ENCODE measurements at regions of chr17 and their contacts with region 1.

Region 1: GRCh38 chr17:72120642-72121163 is at the start of gene SOX9:
- DNase-seq: peak; percentile 81 to 92
- ATAC-seq: peak; percentile 92 to 94 (median 93)
- H3K4me3 ChIP-seq: peak within 1 kb of the TSS; percentile 81
- H3K27ac ChIP-seq: peak within 1 kb of the TSS; percentile 88
- H3K4me1 ChIP-seq: peaks cover 5% of the 10 kb centered on the region
- H3K27me3 ChIP-seq: peaks cover 0 to 32% (median 12%) of the 10 kb centered on the region in 3 donors
- CTCF ChIP-seq: no peak
- total RNA-seq, gene SOX9: 1.6 to 2.7 (median 2.1) TPM

Region 2: DNA sequence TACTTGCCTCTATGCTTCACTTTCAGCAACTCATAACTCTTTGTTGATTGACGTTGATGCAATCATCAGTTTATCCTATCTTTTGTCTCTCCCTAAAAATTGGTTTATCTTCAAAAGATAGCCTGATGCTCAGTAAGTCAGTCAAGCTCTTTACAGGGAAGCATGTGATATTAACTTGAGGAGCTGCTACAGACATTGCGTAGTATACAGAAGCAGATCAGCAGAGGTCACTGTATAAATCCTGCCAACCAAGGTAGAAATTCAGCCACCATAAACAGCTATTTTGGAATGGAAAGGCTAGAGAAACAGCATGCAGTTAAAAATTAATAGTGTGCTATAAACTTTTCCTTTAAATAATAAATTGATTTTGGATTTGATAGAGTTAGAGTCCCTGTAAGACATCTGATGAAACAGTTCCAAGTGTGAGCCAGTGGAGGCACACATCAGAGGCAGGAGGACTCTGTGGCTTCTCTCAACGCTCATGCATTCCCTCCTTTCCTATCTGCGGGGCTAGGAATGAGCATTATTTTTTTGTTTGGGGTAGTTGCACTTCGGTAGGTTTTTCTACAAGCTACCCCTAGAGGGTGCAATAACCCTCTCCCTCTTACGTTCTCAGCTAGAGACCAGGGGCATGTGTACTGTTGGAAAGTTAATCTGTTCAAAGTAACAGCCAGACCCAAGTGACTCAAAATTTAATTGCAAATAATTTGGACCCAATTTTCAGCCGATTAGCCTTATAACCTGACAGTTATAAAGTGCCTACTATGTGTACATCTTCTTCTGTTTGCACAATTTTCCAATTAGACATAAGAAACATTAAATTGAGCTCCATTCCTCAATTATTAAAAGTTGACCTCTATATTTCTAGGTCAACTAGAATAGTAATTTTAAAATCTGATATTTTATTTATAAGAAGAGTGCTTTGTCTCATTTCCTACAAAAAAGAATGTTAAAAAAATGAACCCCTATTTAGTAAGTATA is 647.6 kb before region 1 on chr17:
- intact Hi-C with region 1: loop called (anchors 5 to 10 kb)
- DNase-seq: no peak
- ATAC-seq: peak; percentile 58 to 67 (median 64)
- H3K4me3 ChIP-seq: no peak overlapping the region
- H3K27ac ChIP-seq: no peak overlapping the region
- H3K4me1 ChIP-seq: no peaks in the 10 kb centered on the region
- H3K27me3 ChIP-seq: no peaks in the 10 kb centered on the region
- CTCF ChIP-seq: peak; percentile 57

Region 3: GRCh38 chr17:71777048-71777640 is 343.6 kb before region 1 on chr17:
- intact Hi-C with region 1: no loop called
- DNase-seq: no peak
- ATAC-seq: no peak
- H3K4me3 ChIP-seq: no peak overlapping the region
- H3K27ac ChIP-seq: no peak overlapping the region
- H3K4me1 ChIP-seq: no peaks in the 10 kb centered on the region
- H3K27me3 ChIP-seq: peaks cover 0 to 2% (median 0%) of the 10 kb centered on the region in 3 donors
- CTCF ChIP-seq: no peak

Region 4: GRCh38 chr17:71922439-71922838 is 198.3 kb before region 1 on chr17:
- intact Hi-C with region 1: loop called in 1 of 2 experiments (anchors 10 kb)
- DNase-seq: no peak
- ATAC-seq: peak in 2 of 4 donors; percentile 62 to 73
- H3K4me3 ChIP-seq: no peak overlapping the region
- H3K27ac ChIP-seq: peak overlapping the region; percentile 38
- H3K4me1 ChIP-seq: peaks cover 7% of the 10 kb centered on the region
- H3K27me3 ChIP-seq: no peaks in the 10 kb centered on the region
- CTCF ChIP-seq: no peak

Region 5: DNA sequence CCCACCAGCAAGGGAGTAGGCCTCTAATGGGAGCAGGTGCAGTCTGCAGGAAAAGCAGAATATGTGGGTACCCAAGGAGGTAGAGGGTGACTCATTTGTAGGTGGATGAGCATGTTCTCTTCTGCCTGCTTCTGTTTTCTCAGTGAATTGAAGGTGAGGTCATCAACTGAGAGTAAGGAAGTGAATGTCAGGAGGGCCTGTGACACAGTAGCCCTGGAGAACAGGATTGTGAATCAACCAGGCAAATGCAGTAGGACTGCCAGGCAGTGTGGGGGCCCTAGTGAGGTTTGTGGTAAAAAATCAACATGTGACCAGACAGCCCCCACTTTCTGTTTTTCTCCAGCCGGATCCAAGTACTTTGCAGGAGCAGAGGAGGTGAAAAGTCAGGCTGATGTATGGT is 150.4 kb before region 1 on chr17:
- intact Hi-C with region 1: loop called (anchors 5 kb)
- DNase-seq: no peak
- ATAC-seq: no peak
- H3K4me3 ChIP-seq: no peak overlapping the region
- H3K27ac ChIP-seq: no peak overlapping the region
- H3K4me1 ChIP-seq: peaks cover 5% of the 10 kb centered on the region
- H3K27me3 ChIP-seq: no peaks in the 10 kb centered on the region
- CTCF ChIP-seq: no peak

Region 6: GRCh38 chr17:71976011-71976649 is 144.6 kb before region 1 on chr17:
- intact Hi-C with region 1: loop called (anchors 5 kb)
- DNase-seq: peak; percentile 90 to 94
- ATAC-seq: peak; percentile 95 to 99 (median 97)
- H3K4me3 ChIP-seq: peak overlapping the region; percentile 66
- H3K27ac ChIP-seq: peak overlapping the region; percentile 92
- H3K4me1 ChIP-seq: peaks cover 5% of the 10 kb centered on the region
- H3K27me3 ChIP-seq: no peaks in the 10 kb centered on the region
- CTCF ChIP-seq: no peak

Region 7: DNA sequence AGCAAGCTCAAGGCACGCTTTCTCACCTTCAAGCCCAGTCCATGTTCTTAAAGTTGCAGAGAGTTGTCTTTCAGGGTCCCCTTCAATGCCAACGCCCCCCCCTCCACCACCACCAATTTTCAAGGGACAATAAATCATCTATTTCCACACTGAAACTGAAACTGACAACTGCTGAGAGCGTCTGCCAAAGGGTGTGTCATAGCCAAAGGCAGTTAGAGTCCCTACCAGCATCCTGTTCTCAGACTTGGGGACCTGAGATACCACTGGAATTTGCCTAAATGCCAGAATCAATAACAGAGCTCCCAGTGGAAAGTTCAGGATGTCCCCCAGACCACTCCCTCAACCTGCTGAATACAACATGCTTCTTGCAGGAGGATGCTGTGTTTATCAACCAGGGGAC is 133.1 kb before region 1 on chr17:
- intact Hi-C with region 1: no loop called
- DNase-seq: no peak
- ATAC-seq: peak in 2 of 4 donors; percentile 64 to 86
- H3K4me3 ChIP-seq: no peak overlapping the region
- H3K27ac ChIP-seq: no peak overlapping the region
- H3K4me1 ChIP-seq: no peaks in the 10 kb centered on the region
- H3K27me3 ChIP-seq: no peaks in the 10 kb centered on the region
- CTCF ChIP-seq: no peak

Region 8: DNA sequence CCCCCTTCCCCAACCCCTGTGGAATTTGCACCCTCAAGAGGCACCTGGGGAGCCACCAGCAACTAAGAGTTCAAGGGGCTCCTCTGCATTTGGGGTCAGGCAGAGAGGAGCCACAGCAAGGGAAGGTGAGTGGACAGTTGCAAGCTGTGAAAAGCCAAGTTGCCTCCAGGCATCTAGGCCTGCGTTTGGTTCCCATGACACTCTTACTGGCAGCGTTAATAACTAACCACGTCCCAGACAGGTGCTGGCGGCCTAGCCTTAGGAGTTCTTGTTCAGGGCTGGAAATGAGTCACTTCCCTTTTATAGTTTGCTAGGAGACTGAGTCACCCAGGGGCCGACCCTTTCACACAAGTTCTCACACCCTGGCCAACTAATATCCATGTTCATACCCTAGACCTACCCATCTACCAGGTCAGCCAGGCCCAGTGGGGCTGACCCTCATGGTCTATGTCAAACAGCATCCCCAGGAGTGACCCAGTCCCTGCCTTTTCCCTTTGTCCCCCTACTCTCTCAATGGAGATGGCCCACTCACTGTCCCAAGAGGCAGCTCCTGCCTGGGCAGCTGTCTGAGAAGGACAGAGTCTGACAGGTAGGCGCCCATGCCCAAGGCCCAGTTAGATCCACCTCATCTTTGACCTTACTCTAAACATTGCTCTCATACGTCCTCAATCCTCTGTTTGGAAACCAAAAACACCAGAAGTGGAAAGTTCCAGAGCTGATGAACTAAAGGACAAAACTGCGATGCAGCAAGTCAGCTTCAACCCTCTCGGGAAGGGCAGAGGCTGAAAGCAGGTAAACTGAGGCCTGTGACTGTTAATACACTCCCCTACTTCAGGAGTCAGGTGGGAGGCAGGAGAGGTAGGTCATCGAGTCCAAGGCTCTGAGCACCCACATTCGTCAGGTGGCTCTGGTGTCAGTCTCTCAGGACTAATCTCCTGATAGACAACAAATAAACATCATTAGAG is 300.7 kb after region 1 on chr17:
- intact Hi-C with region 1: loop called in 1 of 2 experiments (anchors 10 kb)
- DNase-seq: peak; percentile 57 to 60
- ATAC-seq: peak; percentile 83 to 89 (median 88)
- H3K4me3 ChIP-seq: no peak overlapping the region
- H3K27ac ChIP-seq: no peak overlapping the region
- H3K4me1 ChIP-seq: peaks cover 5% of the 10 kb centered on the region
- H3K27me3 ChIP-seq: no peaks in the 10 kb centered on the region
- CTCF ChIP-seq: no peak

Measured in psoas muscle (tissue), 8 donors.